CD4-positive, alpha-beta T cell (primary cell): ENCODE measurements at regions of chr19 and their contacts with region 1.

Region 1: GRCh38 chr19:51593969-51594773 is 23.1 kb downstream of the ZNF175 start:
- DNase-seq: peak; percentile 88 to 99 (median 95)
- ATAC-seq: peak; percentile 100
- H3K4me3 ChIP-seq: peak overlapping the region; percentile 80
- H3K4me3 Mint-ChIP-seq: peak overlapping the region; percentile 94
- H3K27ac ChIP-seq: peak overlapping the region in 1 of 2 donors; percentile 42
- H3K27ac Mint-ChIP-seq: peak overlapping the region; percentile 71
- H3K4me1 ChIP-seq: peaks cover 21% of the 10 kb centered on the region
- H3K4me1 Mint-ChIP-seq: peaks cover 29% of the 10 kb centered on the region
- H3K27me3 ChIP-seq: peaks cover 7 to 8% of the 10 kb centered on the region in 2 experiments
- H3K27me3 Mint-ChIP-seq: peaks cover 31% of the 10 kb centered on the region
- CTCF ChIP-seq: no peak

Region 2: DNA sequence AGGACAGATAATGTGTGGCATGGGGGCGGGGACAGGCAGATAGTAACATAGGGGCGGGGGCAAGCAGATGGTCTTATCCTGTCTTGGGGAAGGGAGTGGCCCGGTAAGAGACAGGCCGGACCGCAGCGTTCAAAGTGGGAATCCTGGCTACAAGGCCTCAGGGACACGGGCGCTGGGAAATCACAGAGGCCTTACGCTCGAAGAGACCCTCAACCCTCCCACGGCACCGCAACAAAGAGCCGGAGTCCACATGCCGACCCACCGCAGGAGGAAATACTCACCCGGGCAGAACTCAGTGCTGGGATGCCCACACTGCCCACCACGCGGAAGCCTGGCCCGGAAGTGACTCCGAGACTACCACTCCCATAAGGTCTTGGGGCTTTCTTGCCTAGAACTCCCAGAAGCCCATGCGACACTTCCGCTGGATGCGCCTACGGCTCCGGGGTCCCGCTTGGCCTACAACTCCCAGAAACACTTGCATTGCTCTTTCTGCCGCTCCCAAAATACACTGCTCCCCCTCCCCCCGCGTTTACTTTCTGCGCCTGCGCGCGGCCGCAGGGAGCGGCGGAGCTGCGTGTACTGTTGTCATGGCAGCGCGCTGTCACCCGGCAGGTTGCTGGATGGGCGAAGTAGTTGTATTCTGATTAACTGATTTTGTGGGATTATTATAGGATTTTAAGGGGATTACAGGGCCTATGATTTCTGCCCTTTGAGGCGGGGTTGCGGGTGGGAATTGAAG is 485.9 kb before region 1 on chr19 and contains the start of gene CTU1:
- CTCF ChIA-PET with region 1: no interaction called
- POLR2A ChIA-PET with region 1: no interaction called
- intact Hi-C with region 1: loop called (anchors 1 to 2 kb)
- DNase-seq: peak; percentile 96 to 100 (median 98)
- ATAC-seq: peak; percentile 98
- H3K4me3 ChIP-seq: peak within 1 kb of the TSS; percentile 83
- H3K4me3 Mint-ChIP-seq: peak within 1 kb of the TSS; percentile 95
- H3K27ac ChIP-seq: peak within 1 kb of the TSS; percentile 60 to 63
- H3K27ac Mint-ChIP-seq: peak within 1 kb of the TSS; percentile 91
- H3K4me1 ChIP-seq: peaks cover 29% of the 10 kb centered on the region
- H3K4me1 Mint-ChIP-seq: peaks cover 38% of the 10 kb centered on the region
- H3K27me3 ChIP-seq: no peaks in the 10 kb centered on the region
- H3K27me3 Mint-ChIP-seq: no peaks in the 10 kb centered on the region
- CTCF ChIP-seq: no peak
- total RNA-seq, gene CTU1: 1.4 to 1.6 TPM

Region 3: GRCh38 chr19:51367565-51368365 is 226.4 kb before region 1 on chr19:
- CTCF ChIA-PET with region 1: no interaction called
- POLR2A ChIA-PET with region 1: no interaction called
- intact Hi-C with region 1: loop called in 1 of 2 experiments (anchors 10 kb)
- DNase-seq: peak; percentile 87 to 98 (median 94)
- ATAC-seq: peak; percentile 78
- H3K4me3 ChIP-seq: peak overlapping the region; percentile 90
- H3K4me3 Mint-ChIP-seq: peak overlapping the region; percentile 96
- H3K27ac ChIP-seq: peak overlapping the region; percentile 65 to 73
- H3K27ac Mint-ChIP-seq: peak overlapping the region; percentile 84
- H3K4me1 ChIP-seq: peaks cover 80% of the 10 kb centered on the region
- H3K4me1 Mint-ChIP-seq: peaks cover 74% of the 10 kb centered on the region
- H3K27me3 ChIP-seq: no peaks in the 10 kb centered on the region
- H3K27me3 Mint-ChIP-seq: no peaks in the 10 kb centered on the region
- CTCF ChIP-seq: no peak

Region 4: DNA sequence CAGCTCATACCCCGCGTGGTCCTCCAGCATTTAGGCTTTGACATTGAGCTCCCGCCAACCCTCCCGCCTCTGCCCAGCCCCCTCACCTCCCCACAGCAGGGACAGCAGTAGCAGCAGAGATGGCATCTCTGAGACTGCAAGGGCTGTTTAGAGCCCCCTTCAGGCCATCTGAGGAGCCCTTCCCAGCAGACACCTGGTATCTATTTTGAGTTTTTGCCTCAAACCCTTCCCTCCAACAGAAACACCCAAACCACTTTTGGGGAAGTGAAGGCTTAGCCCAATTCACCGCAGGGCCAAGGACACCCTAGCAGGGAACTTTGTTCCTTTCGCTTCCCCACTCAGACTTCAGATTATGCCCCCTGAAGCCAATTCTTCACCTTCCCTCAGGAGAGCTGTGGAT is 29.4 kb before region 1 on chr19:
- CTCF ChIA-PET with region 1: no interaction called
- POLR2A ChIA-PET with region 1: no interaction called
- intact Hi-C with region 1: loop called in 1 of 2 experiments (anchors 5 kb)
- DNase-seq: peak in 2 of 14 experiments; percentile 23 to 24
- ATAC-seq: no peak
- H3K4me3 ChIP-seq: no peak overlapping the region
- H3K4me3 Mint-ChIP-seq: no peak overlapping the region
- H3K27ac ChIP-seq: no peak overlapping the region
- H3K27ac Mint-ChIP-seq: no peak overlapping the region
- H3K4me1 ChIP-seq: no peaks in the 10 kb centered on the region
- H3K4me1 Mint-ChIP-seq: no peaks in the 10 kb centered on the region
- H3K27me3 ChIP-seq: peaks cover 25 to 36% of the 10 kb centered on the region in 2 experiments
- H3K27me3 Mint-ChIP-seq: peaks cover 60% of the 10 kb centered on the region
- CTCF ChIP-seq: no peak

Region 5: GRCh38 chr19:51570962-51571575 is 23.1 kb before region 1 on chr19 and contains the start of gene ZNF175:
- CTCF ChIA-PET with region 1: no interaction called
- POLR2A ChIA-PET with region 1: no interaction called
- intact Hi-C with region 1: loop called (anchors 1 to 2 kb)
- DNase-seq: peak; percentile 77 to 94 (median 83)
- ATAC-seq: peak; percentile 98
- H3K4me3 ChIP-seq: peak within 1 kb of the TSS; percentile 76
- H3K4me3 Mint-ChIP-seq: peak within 1 kb of the TSS; percentile 94
- H3K27ac ChIP-seq: no peak within 1 kb of the TSS
- H3K27ac Mint-ChIP-seq: peak within 1 kb of the TSS; percentile 72
- H3K4me1 ChIP-seq: peaks cover 16% of the 10 kb centered on the region
- H3K4me1 Mint-ChIP-seq: peaks cover 28% of the 10 kb centered on the region
- H3K27me3 ChIP-seq: peaks cover 0 to 2% of the 10 kb centered on the region in 2 experiments
- H3K27me3 Mint-ChIP-seq: peaks cover 7% of the 10 kb centered on the region
- CTCF ChIP-seq: no peak
- total RNA-seq, gene ZNF175: 1.1 to 1.9 TPM

Region 6: DNA sequence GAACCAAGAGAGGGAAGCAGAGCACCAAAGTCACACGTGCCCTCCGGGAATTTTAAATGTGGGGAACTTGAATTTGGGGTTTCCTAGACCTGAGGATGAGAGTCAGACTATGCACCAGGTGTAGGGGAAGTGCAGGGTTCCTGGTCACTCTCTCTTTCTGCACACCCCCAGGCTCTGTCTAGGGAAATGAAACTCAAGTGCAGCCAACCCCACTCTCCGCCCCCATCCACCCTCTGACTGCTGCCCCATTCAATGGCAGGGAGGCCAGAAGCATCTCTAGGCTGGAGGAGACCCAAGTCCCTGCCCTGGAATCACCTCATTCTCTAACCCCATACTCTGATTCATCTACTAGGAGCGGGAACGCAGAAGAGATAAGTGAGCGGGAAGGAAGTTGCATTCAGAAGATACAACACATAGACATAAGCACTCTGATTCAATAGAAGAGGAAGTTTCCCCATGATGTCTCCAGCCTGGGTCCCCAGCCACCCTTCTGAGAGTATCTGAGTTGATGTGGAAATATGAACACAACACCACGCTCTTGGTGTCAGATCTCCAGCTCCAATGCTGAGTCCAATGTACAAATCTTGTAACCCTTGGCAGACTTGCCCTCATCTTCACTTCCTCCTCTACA is 57.2 kb after region 1 on chr19:
- CTCF ChIA-PET with region 1: no interaction called
- POLR2A ChIA-PET with region 1: no interaction called
- intact Hi-C with region 1: no loop called
- DNase-seq: peak in 2 of 14 experiments; percentile 54 to 60
- ATAC-seq: no peak
- H3K4me3 ChIP-seq: no peak overlapping the region
- H3K4me3 Mint-ChIP-seq: no peak overlapping the region
- H3K27ac ChIP-seq: no peak overlapping the region
- H3K27ac Mint-ChIP-seq: no peak overlapping the region
- H3K4me1 ChIP-seq: no peaks in the 10 kb centered on the region
- H3K4me1 Mint-ChIP-seq: no peaks in the 10 kb centered on the region
- H3K27me3 ChIP-seq: peaks cover 5 to 6% of the 10 kb centered on the region in 2 experiments
- H3K27me3 Mint-ChIP-seq: peaks cover 51% of the 10 kb centered on the region
- CTCF ChIP-seq: no peak

Region 7: GRCh38 chr19:51926784-51927742 is 332.9 kb after region 1 on chr19 and contains the start of gene ZNF613:
- CTCF ChIA-PET with region 1: no interaction called
- POLR2A ChIA-PET with region 1: no interaction called
- intact Hi-C with region 1: loop called in 1 of 2 experiments (anchors 10 kb)
- DNase-seq: peak; percentile 72 to 93 (median 79)
- ATAC-seq: peak; percentile 88
- H3K4me3 ChIP-seq: peak within 1 kb of the TSS; percentile 78
- H3K4me3 Mint-ChIP-seq: peak within 1 kb of the TSS; percentile 97
- H3K27ac ChIP-seq: peak within 1 kb of the TSS; percentile 55 to 60
- H3K27ac Mint-ChIP-seq: peak within 1 kb of the TSS; percentile 86
- H3K4me1 ChIP-seq: peaks cover 17% of the 10 kb centered on the region
- H3K4me1 Mint-ChIP-seq: peaks cover 36% of the 10 kb centered on the region
- H3K27me3 ChIP-seq: no peaks in the 10 kb centered on the region
- H3K27me3 Mint-ChIP-seq: no peaks in the 10 kb centered on the region
- CTCF ChIP-seq: peak; percentile 22
- total RNA-seq, gene ZNF613: 0.67 to 1.3 TPM